ENCODE measurements at regions of chr16 and their contacts with region 1.

Region 1: DNA sequence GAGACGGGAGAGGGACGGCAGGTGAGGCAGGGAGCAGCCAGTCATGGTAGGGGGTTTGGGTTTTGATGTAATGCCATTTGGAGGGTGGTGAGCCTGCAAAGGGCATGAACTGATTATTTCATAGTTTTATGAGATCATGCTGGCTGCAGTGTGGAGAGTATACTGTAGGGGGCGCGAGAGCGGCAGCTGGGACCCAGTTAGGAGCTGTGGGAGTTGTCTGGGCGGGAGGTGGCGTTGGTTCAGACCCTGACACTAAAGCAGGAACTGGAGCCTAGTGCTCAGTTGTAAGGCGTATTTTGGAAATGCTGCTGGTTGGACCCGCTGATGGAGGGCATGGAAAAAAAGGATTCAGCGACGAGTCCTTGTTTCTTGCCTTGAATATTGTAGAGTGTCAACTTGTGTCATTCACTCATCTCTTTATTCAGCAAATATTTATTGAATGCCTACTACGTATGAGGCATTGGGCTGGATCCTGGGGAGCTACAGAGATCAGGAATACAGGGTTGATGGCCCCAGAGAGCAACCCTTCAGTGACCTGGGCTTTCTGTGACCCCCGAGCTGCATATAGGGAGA is 23.7 kb upstream of the KDM8 start:
- DNase-seq: peak; percentile 83
- H3K4me3 ChIP-seq: no peak overlapping the region
- H3K27ac ChIP-seq: no peak overlapping the region
- H3K4me1 ChIP-seq: no peaks in the 10 kb centered on the region
- H3K27me3 ChIP-seq: no peaks in the 10 kb centered on the region
- CTCF ChIP-seq: peak; percentile 96

Region 2: GRCh38 chr16:27367461-27368357 is 188.1 kb after region 1 on chr16:
- CTCF ChIA-PET with region 1: interaction called, 45 read pairs
- POLR2A ChIA-PET with region 1: no interaction called
- intact Hi-C with region 1: loop called (anchors 2 kb)
- DNase-seq: peak; percentile 88
- H3K4me3 ChIP-seq: peak overlapping the region; percentile 0
- H3K27ac ChIP-seq: peak overlapping the region; percentile 54
- H3K4me1 ChIP-seq: peaks cover 15% of the 10 kb centered on the region
- H3K27me3 ChIP-seq: no peaks in the 10 kb centered on the region
- CTCF ChIP-seq: peak; percentile 75

Region 3: GRCh38 chr16:27374804-27375425 is 195.3 kb after region 1 on chr16:
- CTCF ChIA-PET with region 1: interaction called, 14 read pairs
- POLR2A ChIA-PET with region 1: no interaction called
- intact Hi-C with region 1: no loop called
- DNase-seq: peak; percentile 94
- H3K4me3 ChIP-seq: no peak overlapping the region
- H3K27ac ChIP-seq: no peak overlapping the region
- H3K4me1 ChIP-seq: no peaks in the 10 kb centered on the region
- H3K27me3 ChIP-seq: no peaks in the 10 kb centered on the region
- CTCF ChIP-seq: peak; percentile 77

Region 4: GRCh38 chr16:27449434-27450195 is 270.0 kb after region 1 on chr16:
- CTCF ChIA-PET with region 1: interaction called, 13 read pairs
- POLR2A ChIA-PET with region 1: no interaction called
- intact Hi-C with region 1: no loop called
- DNase-seq: no peak
- H3K4me3 ChIP-seq: no peak overlapping the region
- H3K27ac ChIP-seq: no peak overlapping the region
- H3K4me1 ChIP-seq: no peaks in the 10 kb centered on the region
- H3K27me3 ChIP-seq: no peaks in the 10 kb centered on the region
- CTCF ChIP-seq: no peak

Region 5: GRCh38 chr16:27461483-27462171 is 282.0 kb after region 1 on chr16:
- CTCF ChIA-PET with region 1: interaction called, 4 read pairs
- POLR2A ChIA-PET with region 1: no interaction called
- intact Hi-C with region 1: loop called (anchors 1 kb)
- DNase-seq: no peak
- H3K4me3 ChIP-seq: no peak overlapping the region
- H3K27ac ChIP-seq: no peak overlapping the region
- H3K4me1 ChIP-seq: no peaks in the 10 kb centered on the region
- H3K27me3 ChIP-seq: no peaks in the 10 kb centered on the region
- CTCF ChIP-seq: no peak

Region 6: GRCh38 chr16:27549859-27550581 is 370.4 kb after region 1 on chr16 and contains the starts of genes GTF3C1 and KATNIP:
- CTCF ChIA-PET with region 1: no interaction called
- POLR2A ChIA-PET with region 1: no interaction called
- intact Hi-C with region 1: no loop called
- DNase-seq: peak; percentile 99
- H3K4me3 ChIP-seq: peak within 1 kb of the TSS; percentile 83
- H3K27ac ChIP-seq: peak within 1 kb of the TSS; percentile 68
- H3K4me1 ChIP-seq: peaks cover 19% of the 10 kb centered on the region
- H3K27me3 ChIP-seq: no peaks in the 10 kb centered on the region
- CTCF ChIP-seq: no peak
- total RNA-seq, gene GTF3C1: 88.7 and 94.2 TPM in 2 replicates
- total RNA-seq, gene KATNIP: 23.5 and 23.9 TPM in 2 replicates

Measured in A673 (cell line).